ENCODE measurements at regions of chr13 and their contacts with region 1.

Region 1: DNA sequence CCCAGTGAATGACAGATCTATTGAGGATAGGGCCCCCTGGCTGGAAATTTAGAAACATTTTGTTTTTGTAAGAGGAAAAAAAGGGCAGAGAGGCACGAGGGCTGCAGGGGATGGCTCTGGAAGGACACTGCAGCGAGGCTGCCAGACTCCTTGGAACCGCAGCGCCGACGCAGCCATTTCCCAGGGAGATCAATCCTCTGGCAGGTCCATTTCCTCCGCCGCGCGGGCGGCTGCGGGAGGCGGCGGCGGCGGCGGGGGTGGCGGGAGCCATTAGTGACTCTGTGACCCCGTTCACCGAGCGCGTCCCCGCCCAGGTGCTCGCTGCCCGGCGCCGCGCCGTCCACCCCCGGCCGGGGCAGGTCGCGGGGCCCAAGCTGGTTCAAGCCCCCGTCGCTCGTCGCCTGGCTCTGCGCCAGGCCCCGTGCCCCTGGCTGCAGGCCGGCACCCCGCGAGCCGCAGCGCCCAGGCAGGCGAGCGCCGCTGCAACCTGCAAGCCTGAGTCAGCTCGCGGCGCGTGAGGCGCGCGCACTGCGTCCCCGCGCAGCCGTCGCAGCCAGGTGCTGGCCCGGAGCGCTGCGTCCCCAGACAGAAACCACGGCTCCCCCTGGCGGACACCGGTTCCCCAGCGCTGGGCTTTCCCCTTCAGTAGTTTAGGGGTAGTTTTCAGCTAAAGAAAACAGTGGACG is 192.6 kb downstream of the KATNAL1 start:
- DNase-seq: peak; percentile 96
- ATAC-seq: peak; percentile 92
- H3K4me3 Mint-ChIP-seq: peak overlapping the region; percentile 70
- H3K27ac Mint-ChIP-seq: peak overlapping the region; percentile 68
- H3K4me1 Mint-ChIP-seq: peaks cover 33% of the 10 kb centered on the region
- H3K27me3 Mint-ChIP-seq: no peaks in the 10 kb centered on the region

Region 2: GRCh38 chr13:29508130-29508875 is 606.4 kb before region 1 on chr13:
- CTCF ChIA-PET with region 1: interaction called, 4 read pairs
- POLR2A ChIA-PET with region 1: no interaction called
- intact Hi-C with region 1: loop called (anchors 1 to 10 kb)
- DNase-seq: peak; percentile 86
- ATAC-seq: peak; percentile 80
- H3K4me3 Mint-ChIP-seq: no peak overlapping the region
- H3K27ac Mint-ChIP-seq: no peak overlapping the region
- H3K4me1 Mint-ChIP-seq: no peaks in the 10 kb centered on the region
- H3K27me3 Mint-ChIP-seq: peaks cover 3% of the 10 kb centered on the region

Region 3: DNA sequence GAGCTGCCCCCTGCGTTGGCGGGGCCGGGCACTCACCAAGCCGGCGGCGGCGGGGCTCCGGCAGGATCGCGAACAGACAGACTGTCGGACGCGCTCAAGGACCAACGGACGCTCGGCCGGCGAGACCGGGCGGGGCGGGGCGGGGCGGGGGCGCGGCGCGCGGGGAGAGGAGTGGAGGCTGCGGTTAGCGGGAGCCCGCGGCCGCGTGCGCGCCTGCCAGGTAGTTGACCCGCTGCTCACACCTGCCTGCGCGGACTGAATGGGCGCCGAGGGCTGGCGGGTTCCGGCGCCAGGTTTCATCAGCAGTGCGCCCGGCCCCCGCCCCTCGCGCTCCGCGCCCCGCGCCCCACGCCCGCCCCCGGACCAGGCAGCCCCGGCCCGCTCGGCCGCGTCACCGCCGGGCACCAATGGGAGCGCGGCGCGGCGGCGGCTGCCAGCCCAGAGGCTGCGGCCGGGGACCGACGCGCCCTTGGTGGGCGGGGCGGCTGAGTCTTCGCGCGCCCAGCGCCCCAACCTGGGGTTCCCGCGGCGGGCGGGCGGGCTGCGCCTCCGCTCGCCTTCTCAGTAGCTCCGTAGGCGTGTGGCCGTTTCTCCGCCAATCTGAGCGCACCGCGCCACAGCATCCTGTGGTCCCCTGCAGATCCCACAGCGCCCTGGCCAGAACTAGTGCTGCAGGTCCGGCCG is 519.2 kb before region 1 on chr13 and contains the start of gene SLC7A1:
- CTCF ChIA-PET with region 1: interaction called, 4 read pairs
- POLR2A ChIA-PET with region 1: interaction called, 3 read pairs
- intact Hi-C with region 1: loop called (anchors 1 kb)
- DNase-seq: peak; percentile 92
- ATAC-seq: peak; percentile 88
- H3K4me3 Mint-ChIP-seq: peak within 1 kb of the TSS; percentile 90
- H3K27ac Mint-ChIP-seq: peak within 1 kb of the TSS; percentile 95
- H3K4me1 Mint-ChIP-seq: peaks cover 36% of the 10 kb centered on the region
- H3K27me3 Mint-ChIP-seq: no peaks in the 10 kb centered on the region
- total RNA-seq, gene SLC7A1: 91.1 to 126 TPM

Region 4: GRCh38 chr13:29771247-29771646 is 343.5 kb before region 1 on chr13:
- CTCF ChIA-PET with region 1: interaction called, 178 read pairs
- POLR2A ChIA-PET with region 1: interaction called, 9 read pairs
- intact Hi-C with region 1: loop called (anchors 1 kb)
- DNase-seq: no peak
- ATAC-seq: no peak
- H3K4me3 Mint-ChIP-seq: no peak overlapping the region
- H3K27ac Mint-ChIP-seq: no peak overlapping the region
- H3K4me1 Mint-ChIP-seq: peaks cover 8% of the 10 kb centered on the region
- H3K27me3 Mint-ChIP-seq: no peaks in the 10 kb centered on the region

Region 5: DNA sequence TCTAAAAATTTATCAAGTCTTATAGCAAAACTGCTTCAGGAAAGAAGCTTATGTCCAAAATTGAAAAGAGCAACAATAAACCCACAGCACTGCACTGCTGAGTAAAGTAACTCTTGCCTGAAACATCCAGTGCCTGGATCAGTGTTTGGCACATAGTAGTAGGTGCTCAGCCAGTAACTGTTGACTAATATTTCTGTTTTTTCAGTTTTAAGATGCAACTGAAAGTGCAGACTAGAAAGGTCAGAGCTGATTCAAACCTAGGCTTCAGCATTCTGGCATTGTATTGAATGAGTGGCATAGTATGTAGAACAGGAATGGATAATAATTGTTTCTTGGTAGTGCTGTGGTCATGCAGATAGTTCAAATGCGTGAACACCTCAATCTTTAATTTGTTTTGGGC is 331.9 kb before region 1 on chr13:
- CTCF ChIA-PET with region 1: interaction called, 11 read pairs
- POLR2A ChIA-PET with region 1: no interaction called
- intact Hi-C with region 1: no loop called
- DNase-seq: peak; percentile 36
- ATAC-seq: peak; percentile 98
- H3K4me3 Mint-ChIP-seq: no peak overlapping the region
- H3K27ac Mint-ChIP-seq: peak overlapping the region; percentile 53
- H3K4me1 Mint-ChIP-seq: peaks cover 32% of the 10 kb centered on the region
- H3K27me3 Mint-ChIP-seq: no peaks in the 10 kb centered on the region

Region 6: GRCh38 chr13:30125422-30126073 is 10.8 kb after region 1 on chr13:
- CTCF ChIA-PET with region 1: interaction called, 60 read pairs
- POLR2A ChIA-PET with region 1: no interaction called
- intact Hi-C with region 1: no loop called
- DNase-seq: no peak
- ATAC-seq: no peak
- H3K4me3 Mint-ChIP-seq: no peak overlapping the region
- H3K27ac Mint-ChIP-seq: no peak overlapping the region
- H3K4me1 Mint-ChIP-seq: peaks cover 11% of the 10 kb centered on the region
- H3K27me3 Mint-ChIP-seq: no peaks in the 10 kb centered on the region

Region 7: GRCh38 chr13:30306762-30307193 is 192.1 kb after region 1 on chr13:
- CTCF ChIA-PET with region 1: interaction called, 3 read pairs
- POLR2A ChIA-PET with region 1: interaction called, 3 read pairs
- intact Hi-C with region 1: loop called in 1 of 2 experiments (anchors 1 kb)
- DNase-seq: peak; percentile 95
- ATAC-seq: peak; percentile 91
- H3K4me3 Mint-ChIP-seq: peak overlapping the region; percentile 80
- H3K27ac Mint-ChIP-seq: peak overlapping the region; percentile 79
- H3K4me1 Mint-ChIP-seq: peaks cover 31% of the 10 kb centered on the region
- H3K27me3 Mint-ChIP-seq: no peaks in the 10 kb centered on the region

Measured in activated CD4-positive, alpha-beta T cell treated with anti-CD3 and anti-CD28 coated beads for 36 hours (primary cell).